ENCODE measurements at regions of chr1 and their contacts with region 1.

Region 1: DNA sequence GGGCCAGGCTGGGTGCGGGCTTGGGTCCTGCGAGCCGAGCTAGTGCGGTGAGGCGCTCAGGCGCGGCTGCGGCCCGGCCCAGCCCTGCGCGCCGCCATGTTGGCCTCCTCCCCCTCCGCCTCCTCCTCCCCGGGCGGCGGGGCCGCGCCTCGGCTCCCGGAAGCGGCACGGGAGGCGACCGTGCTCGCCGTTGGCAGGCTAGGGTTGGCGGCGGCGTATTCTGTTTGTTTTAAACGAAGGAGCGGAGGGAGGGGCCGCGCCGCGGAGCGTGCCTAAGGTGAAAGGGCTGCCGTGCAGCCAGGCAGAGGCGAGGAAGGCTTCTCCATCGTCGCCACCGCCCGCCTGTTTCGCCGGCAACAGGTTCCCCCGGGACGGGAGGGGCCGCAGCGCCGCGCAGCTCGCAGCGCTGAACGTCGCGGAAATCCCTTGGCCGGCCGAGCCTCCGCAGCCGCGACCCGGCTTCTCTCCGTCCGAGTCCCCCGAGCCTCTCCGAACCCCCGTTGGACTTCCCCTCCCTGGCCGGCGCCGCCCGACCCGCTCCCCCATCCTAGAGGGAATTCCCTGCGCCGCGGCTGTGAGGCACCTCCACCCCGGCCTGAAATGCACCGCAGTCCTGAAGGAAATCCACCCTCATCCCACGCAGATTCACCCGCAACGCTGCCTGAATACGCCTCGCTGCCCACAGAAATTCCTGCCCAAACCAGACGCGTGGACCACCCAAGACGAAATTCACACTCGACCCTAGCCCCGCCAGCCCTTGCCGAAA is at the start of gene USP24:
- DNase-seq: peak; percentile 86 to 88 (median 87)
- H3K4me3 ChIP-seq: peak within 1 kb of the TSS; percentile 80 to 81
- H3K4me3 Mint-ChIP-seq: peak within 1 kb of the TSS; percentile 88 to 98 (median 95)
- H3K27ac ChIP-seq: peak within 1 kb of the TSS; percentile 87
- H3K27ac Mint-ChIP-seq: peak within 1 kb of the TSS; percentile 96 to 100 (median 98)
- H3K4me1 ChIP-seq: peaks cover 66% of the 10 kb centered on the region
- H3K4me1 Mint-ChIP-seq: peaks cover 48 to 71% (median 62%) of the 10 kb centered on the region in 4 donors
- H3K27me3 ChIP-seq: no peaks in the 10 kb centered on the region
- H3K27me3 Mint-ChIP-seq: no peaks in the 10 kb centered on the region
- total RNA-seq, gene USP24: 73.2 to 74.2 TPM

Region 2: DNA sequence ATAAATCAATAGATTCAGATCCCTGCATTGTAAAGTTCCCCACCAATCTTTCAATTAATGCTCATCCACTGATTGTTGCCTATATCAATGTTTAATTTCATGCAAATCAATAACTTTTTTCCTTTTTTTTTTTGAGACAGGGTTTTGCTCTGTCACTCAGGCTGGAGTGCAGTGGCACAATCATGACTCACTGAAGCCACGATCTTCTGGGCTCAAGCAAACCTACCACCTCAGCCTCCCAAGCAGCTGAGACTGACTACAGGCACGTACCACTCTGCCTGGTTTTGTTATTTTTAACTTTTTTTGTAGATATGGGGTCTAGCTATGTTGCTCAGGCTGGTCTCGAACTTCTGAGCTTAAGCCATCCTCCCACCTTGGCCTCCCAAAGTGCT is 1295.8 kb before region 1 on chr1:
- CTCF ChIA-PET with region 1: no interaction called
- POLR2A ChIA-PET with region 1: no interaction called
- intact Hi-C with region 1: no loop called
- DNase-seq: no peak
- H3K4me3 ChIP-seq: no peak overlapping the region
- H3K4me3 Mint-ChIP-seq: no peak overlapping the region
- H3K27ac ChIP-seq: no peak overlapping the region
- H3K27ac Mint-ChIP-seq: peak overlapping the region; percentile 29 to 88 (median 71)
- H3K4me1 ChIP-seq: peaks cover 16% of the 10 kb centered on the region
- H3K4me1 Mint-ChIP-seq: peaks cover 17 to 32% (median 22%) of the 10 kb centered on the region in 4 donors
- H3K27me3 ChIP-seq: no peaks in the 10 kb centered on the region
- H3K27me3 Mint-ChIP-seq: no peaks in the 10 kb centered on the region

Region 3: DNA sequence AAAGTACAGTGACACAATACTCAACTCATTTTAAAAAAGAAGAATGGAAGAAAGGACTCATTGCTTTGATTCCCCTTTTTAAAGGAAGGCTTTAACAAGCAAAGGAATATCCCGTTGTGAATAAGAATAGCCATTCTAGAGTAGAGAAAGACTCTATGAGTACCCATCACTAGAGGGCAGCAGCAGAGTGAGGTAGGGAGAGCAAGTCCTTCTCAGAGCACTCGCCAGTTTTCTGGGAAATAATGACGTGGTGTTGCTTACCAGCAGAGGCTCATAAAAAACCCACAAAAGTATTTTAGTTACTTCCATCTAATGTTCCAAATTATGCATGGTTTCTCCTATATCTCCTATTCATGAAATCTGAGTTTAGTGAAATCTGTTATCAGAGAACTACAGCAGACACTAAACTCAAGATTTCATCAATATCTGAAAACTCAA is 74.9 kb before region 1 on chr1:
- CTCF ChIA-PET with region 1: interaction called, 4 read pairs
- POLR2A ChIA-PET with region 1: interaction called, 4 read pairs
- intact Hi-C with region 1: loop called (anchors 2 kb)
- DNase-seq: peak; percentile 70 to 79 (median 73)
- H3K4me3 ChIP-seq: no peak overlapping the region
- H3K4me3 Mint-ChIP-seq: no peak overlapping the region
- H3K27ac ChIP-seq: no peak overlapping the region
- H3K27ac Mint-ChIP-seq: peak overlapping the region; percentile 19 to 90 (median 70)
- H3K4me1 ChIP-seq: no peaks in the 10 kb centered on the region
- H3K4me1 Mint-ChIP-seq: peaks cover 5 to 12% (median 8%) of the 10 kb centered on the region in 4 donors
- H3K27me3 ChIP-seq: no peaks in the 10 kb centered on the region
- H3K27me3 Mint-ChIP-seq: no peaks in the 10 kb centered on the region

Region 4: GRCh38 chr1:55150880-55151588 is 64.4 kb before region 1 on chr1:
- CTCF ChIA-PET with region 1: interaction called, 3 read pairs
- POLR2A ChIA-PET with region 1: interaction called, 13 read pairs
- intact Hi-C with region 1: no loop called
- DNase-seq: peak in 4 of 5 donors; percentile 23 to 38 (median 31)
- H3K4me3 ChIP-seq: no peak overlapping the region
- H3K4me3 Mint-ChIP-seq: peak overlapping the region in 7 of 8 donors; percentile 56 to 80 (median 73)
- H3K27ac ChIP-seq: peak overlapping the region; percentile 47
- H3K27ac Mint-ChIP-seq: peak overlapping the region; percentile 81 to 98 (median 91)
- H3K4me1 ChIP-seq: peaks cover 25% of the 10 kb centered on the region
- H3K4me1 Mint-ChIP-seq: peaks cover 21 to 36% (median 26%) of the 10 kb centered on the region in 4 donors
- H3K27me3 ChIP-seq: no peaks in the 10 kb centered on the region
- H3K27me3 Mint-ChIP-seq: no peaks in the 10 kb centered on the region

Region 5: DNA sequence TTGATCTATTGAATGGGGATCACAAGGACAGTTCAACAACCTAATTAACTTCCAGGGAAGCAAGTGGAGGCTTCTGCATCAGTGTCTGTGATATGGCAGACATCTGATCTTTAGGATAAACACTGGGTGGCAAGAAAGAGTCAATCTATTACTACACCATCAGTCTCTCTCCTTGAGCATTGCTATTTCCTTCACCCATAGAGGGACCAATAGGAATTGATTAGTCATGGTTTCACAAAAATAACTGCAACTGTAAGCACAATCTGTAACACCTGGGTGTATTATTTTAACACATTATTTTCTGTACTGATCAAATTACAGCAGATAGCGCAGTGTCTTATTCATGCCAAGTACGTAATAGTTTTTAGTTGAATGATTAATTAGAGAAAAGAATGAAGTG is 50.5 kb before region 1 on chr1:
- CTCF ChIA-PET with region 1: interaction called, 3 read pairs
- POLR2A ChIA-PET with region 1: interaction called, 4 read pairs
- intact Hi-C with region 1: loop called (anchors 5 kb)
- DNase-seq: no peak
- H3K4me3 ChIP-seq: no peak overlapping the region
- H3K4me3 Mint-ChIP-seq: no peak overlapping the region
- H3K27ac ChIP-seq: no peak overlapping the region
- H3K27ac Mint-ChIP-seq: peak overlapping the region in 2 of 7 donors; percentile 38 to 47
- H3K4me1 ChIP-seq: no peaks in the 10 kb centered on the region
- H3K4me1 Mint-ChIP-seq: peaks cover 0 to 9% (median 7%) of the 10 kb centered on the region in 4 donors
- H3K27me3 ChIP-seq: no peaks in the 10 kb centered on the region
- H3K27me3 Mint-ChIP-seq: no peaks in the 10 kb centered on the region

Region 6: GRCh38 chr1:55204997-55205396 is 10.4 kb before region 1 on chr1:
- CTCF ChIA-PET with region 1: no interaction called
- POLR2A ChIA-PET with region 1: interaction called, 27 read pairs
- intact Hi-C with region 1: no loop called
- DNase-seq: no peak
- H3K4me3 ChIP-seq: no peak overlapping the region
- H3K4me3 Mint-ChIP-seq: peak overlapping the region in 4 of 8 donors; percentile 7 to 67 (median 41)
- H3K27ac ChIP-seq: no peak overlapping the region
- H3K27ac Mint-ChIP-seq: peak overlapping the region in 4 of 7 donors; percentile 0 to 70 (median 36)
- H3K4me1 ChIP-seq: peaks cover 91% of the 10 kb centered on the region
- H3K4me1 Mint-ChIP-seq: peaks cover 52 to 77% (median 65%) of the 10 kb centered on the region in 4 donors
- H3K27me3 ChIP-seq: no peaks in the 10 kb centered on the region
- H3K27me3 Mint-ChIP-seq: no peaks in the 10 kb centered on the region

Region 7: DNA sequence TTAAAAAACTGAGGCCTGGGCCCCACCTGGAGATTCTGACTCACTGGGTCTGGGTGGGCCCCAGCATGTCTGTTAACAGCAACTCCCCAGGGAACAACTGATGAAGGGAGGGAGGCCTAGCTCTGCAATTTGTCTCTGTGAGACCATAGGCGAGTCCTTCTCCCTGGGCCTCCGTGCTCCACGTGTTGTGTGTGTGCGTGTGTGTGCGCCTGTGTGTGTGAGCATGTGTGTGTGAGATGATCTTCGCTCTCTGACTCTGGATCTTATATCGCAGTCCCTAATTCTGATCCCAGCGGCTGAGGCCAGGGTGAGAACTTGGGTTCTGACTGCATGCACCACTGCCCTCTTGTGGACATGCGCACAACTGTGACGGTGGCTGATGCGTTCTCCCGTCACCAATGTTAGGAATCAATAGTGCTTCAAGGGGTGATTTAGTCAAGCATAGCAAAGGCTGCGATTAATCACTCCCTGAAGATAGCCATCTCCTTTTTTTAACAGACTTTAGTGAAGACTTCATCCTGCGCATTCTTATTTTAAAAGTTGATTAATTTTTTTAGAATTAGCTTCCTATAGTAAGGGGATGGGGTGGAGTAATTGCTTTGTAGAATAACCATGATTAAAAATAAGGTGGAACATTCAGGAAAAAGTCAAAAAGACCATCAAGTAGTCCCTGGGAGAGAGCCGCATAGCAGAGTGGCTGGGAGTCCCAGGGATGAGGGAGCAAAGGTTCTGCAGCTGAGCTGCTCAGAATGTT is 62.1 kb after region 1 on chr1:
- CTCF ChIA-PET with region 1: interaction called, 3 read pairs
- POLR2A ChIA-PET with region 1: interaction called, 4 read pairs
- intact Hi-C with region 1: loop called (anchors 1 kb)
- DNase-seq: peak; percentile 60 to 71 (median 63)
- H3K4me3 ChIP-seq: no peak overlapping the region
- H3K4me3 Mint-ChIP-seq: peak overlapping the region in 2 of 8 donors; percentile 11 to 45
- H3K27ac ChIP-seq: no peak overlapping the region
- H3K27ac Mint-ChIP-seq: peak overlapping the region in 4 of 7 donors; percentile 11 to 50 (median 26)
- H3K4me1 ChIP-seq: peaks cover 4% of the 10 kb centered on the region
- H3K4me1 Mint-ChIP-seq: peaks cover 2 to 5% (median 4%) of the 10 kb centered on the region in 4 donors
- H3K27me3 ChIP-seq: no peaks in the 10 kb centered on the region
- H3K27me3 Mint-ChIP-seq: peaks cover 1 to 4% of the 10 kb centered on the region in 2 donors

Measured in CD4-positive, alpha-beta memory T cell (primary cell).